Common myeloid progenitor, CD34-positive (primary cell): ENCODE measurements at regions of chr10 and their contacts with region 1.

Region 1: GRCh38 chr10:84205049-84205852 is 10.9 kb downstream of the CDHR1 start:
- DNase-seq: peak; percentile 43 to 71 (median 60)
- H3K4me3 ChIP-seq: no peak overlapping the region
- H3K27ac ChIP-seq: no peak overlapping the region
- H3K4me1 ChIP-seq: no peaks in the 10 kb centered on the region
- H3K27me3 ChIP-seq: peaks cover 0 to 12% (median 6%) of the 10 kb centered on the region in 5 experiments

Region 2: DNA sequence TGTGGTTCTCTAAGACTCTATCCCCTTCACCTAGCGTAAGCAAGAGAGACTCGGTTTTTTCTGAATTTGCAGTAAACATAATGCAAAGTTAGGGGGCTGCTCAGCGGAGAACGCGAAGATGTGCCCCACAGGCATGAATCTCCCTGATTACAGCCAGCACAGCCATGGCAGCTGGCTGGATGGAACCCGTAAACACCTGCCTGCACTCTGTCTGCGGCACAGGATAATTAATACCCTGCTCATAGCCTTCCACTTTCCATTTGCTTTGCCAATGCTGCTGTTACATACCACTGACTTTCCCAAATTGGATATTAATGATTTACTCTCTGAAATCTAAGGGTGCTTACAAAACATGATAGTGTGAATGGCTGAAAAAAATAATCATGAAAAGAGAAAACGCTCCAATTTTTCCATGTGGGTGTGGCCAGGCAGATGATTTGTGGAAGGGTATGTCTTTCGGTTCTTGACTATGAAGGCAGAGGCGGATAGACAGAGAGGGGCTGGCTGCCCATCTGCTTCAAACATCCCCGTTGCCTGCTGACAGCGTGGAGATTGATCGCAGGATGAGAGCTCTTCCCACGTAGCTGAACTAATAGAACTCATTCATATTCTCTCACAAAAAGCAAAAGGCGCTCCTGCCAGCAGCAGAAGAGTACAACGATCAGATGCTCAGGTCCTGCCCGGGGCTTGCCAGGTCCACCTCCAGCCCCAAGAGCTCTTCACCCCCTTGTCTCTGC is 259.1 kb before region 1 on chr10:
- CTCF ChIA-PET with region 1: no interaction called
- POLR2A ChIA-PET with region 1: no interaction called
- DNase-seq: no peak
- H3K4me3 ChIP-seq: no peak overlapping the region
- H3K27ac ChIP-seq: no peak overlapping the region
- H3K4me1 ChIP-seq: no peaks in the 10 kb centered on the region
- H3K27me3 ChIP-seq: peaks cover 0 to 3% (median 2%) of the 10 kb centered on the region in 5 experiments

Region 3: GRCh38 chr10:84126785-84127167 is 78.5 kb before region 1 on chr10:
- CTCF ChIA-PET with region 1: no interaction called
- POLR2A ChIA-PET with region 1: no interaction called
- DNase-seq: no peak
- H3K4me3 ChIP-seq: no peak overlapping the region
- H3K27ac ChIP-seq: no peak overlapping the region
- H3K4me1 ChIP-seq: no peaks in the 10 kb centered on the region
- H3K27me3 ChIP-seq: peaks cover 0 to 4% (median 2%) of the 10 kb centered on the region in 5 experiments

Region 4: GRCh38 chr10:84139126-84140035 is 65.9 kb before region 1 on chr10 and contains the start of gene GHITM:
- CTCF ChIA-PET with region 1: interaction called, 15 read pairs
- POLR2A ChIA-PET with region 1: no interaction called
- DNase-seq: peak; percentile 99 to 100 (median 99)
- H3K4me3 ChIP-seq: peak within 1 kb of the TSS; percentile 81 to 99 (median 94)
- H3K27ac ChIP-seq: peak within 1 kb of the TSS; percentile 93 to 98
- H3K4me1 ChIP-seq: peaks cover 9 to 18% (median 13%) of the 10 kb centered on the region in 4 experiments
- H3K27me3 ChIP-seq: peaks cover 2 to 6% (median 2%) of the 10 kb centered on the region in 5 experiments

Region 5: GRCh38 chr10:84147347-84147746 is 57.9 kb before region 1 on chr10:
- CTCF ChIA-PET with region 1: interaction called, 30 read pairs
- POLR2A ChIA-PET with region 1: no interaction called
- DNase-seq: no peak
- H3K4me3 ChIP-seq: no peak overlapping the region
- H3K27ac ChIP-seq: no peak overlapping the region
- H3K4me1 ChIP-seq: no peaks in the 10 kb centered on the region
- H3K27me3 ChIP-seq: no peaks in the 10 kb centered on the region

Region 6: GRCh38 chr10:84194424-84195040 is 10.7 kb before region 1 on chr10 and contains the start of gene CDHR1:
- CTCF ChIA-PET with region 1: interaction called, 14 read pairs
- POLR2A ChIA-PET with region 1: interaction called, 3 read pairs
- DNase-seq: peak in 2 of 3 donors; percentile 57 to 64
- H3K4me3 ChIP-seq: peak within 1 kb of the TSS; percentile 34 to 67 (median 48)
- H3K27ac ChIP-seq: no peak within 1 kb of the TSS
- H3K4me1 ChIP-seq: peaks cover 0 to 16% (median 12%) of the 10 kb centered on the region in 4 experiments
- H3K27me3 ChIP-seq: peaks cover 5 to 83% (median 37%) of the 10 kb centered on the region in 5 experiments

Region 7: DNA sequence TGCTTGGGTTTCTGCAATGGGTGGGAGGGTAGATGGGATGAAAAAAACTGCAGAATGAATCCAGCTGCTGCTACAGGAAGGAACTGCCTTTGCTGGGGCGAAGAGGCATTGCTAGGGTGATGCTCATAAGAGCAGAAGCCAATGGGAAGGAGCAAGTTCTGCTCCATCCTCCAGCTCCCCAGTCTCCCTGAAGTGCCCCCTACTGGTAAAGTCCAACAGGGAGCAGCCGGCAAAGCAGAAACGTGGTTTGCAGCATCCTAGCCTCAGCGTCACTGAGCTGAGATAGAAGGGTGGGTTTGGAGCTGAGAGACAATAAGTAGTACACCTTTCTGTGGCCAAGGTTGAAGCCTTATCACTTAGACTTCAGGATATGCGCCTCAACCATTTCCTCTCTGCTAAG is 343.6 kb after region 1 on chr10:
- CTCF ChIA-PET with region 1: no interaction called
- POLR2A ChIA-PET with region 1: no interaction called
- DNase-seq: peak in 2 of 3 donors; percentile 9 to 18
- H3K4me3 ChIP-seq: no peak overlapping the region
- H3K27ac ChIP-seq: no peak overlapping the region
- H3K4me1 ChIP-seq: no peaks in the 10 kb centered on the region
- H3K27me3 ChIP-seq: peaks cover 0 to 56% (median 18%) of the 10 kb centered on the region in 5 experiments